ENCODE measurements at regions of chr13 and their contacts with region 1.

Region 1: GRCh38 chr13:25232937-25233515 is 54.3 kb downstream of the MTMR6 start:
- DNase-seq: no peak
- H3K4me3 Mint-ChIP-seq: no peak overlapping the region
- H3K27ac Mint-ChIP-seq: no peak overlapping the region
- H3K4me1 Mint-ChIP-seq: no peaks in the 10 kb centered on the region
- H3K27me3 Mint-ChIP-seq: no peaks in the 10 kb centered on the region

Region 2: GRCh38 chr13:25319771-25320170 is 86.7 kb after region 1 on chr13:
- intact Hi-C with region 1: no loop called
- DNase-seq: no peak
- H3K4me3 Mint-ChIP-seq: no peak overlapping the region
- H3K27ac Mint-ChIP-seq: no peak overlapping the region
- H3K4me1 Mint-ChIP-seq: peaks cover 8% of the 10 kb centered on the region
- H3K27me3 Mint-ChIP-seq: no peaks in the 10 kb centered on the region

Region 3: GRCh38 chr13:25375727-25376358 is 142.8 kb after region 1 on chr13:
- intact Hi-C with region 1: loop called (anchors 1 kb)
- DNase-seq: no peak
- H3K4me3 Mint-ChIP-seq: no peak overlapping the region
- H3K27ac Mint-ChIP-seq: no peak overlapping the region
- H3K4me1 Mint-ChIP-seq: peaks cover 2% of the 10 kb centered on the region
- H3K27me3 Mint-ChIP-seq: peaks cover 57% of the 10 kb centered on the region

Region 4: GRCh38 chr13:25406377-25406915 is 173.4 kb after region 1 on chr13:
- intact Hi-C with region 1: no loop called
- DNase-seq: no peak
- H3K4me3 Mint-ChIP-seq: no peak overlapping the region
- H3K27ac Mint-ChIP-seq: no peak overlapping the region
- H3K4me1 Mint-ChIP-seq: no peaks in the 10 kb centered on the region
- H3K27me3 Mint-ChIP-seq: peaks cover 6% of the 10 kb centered on the region

Region 5: DNA sequence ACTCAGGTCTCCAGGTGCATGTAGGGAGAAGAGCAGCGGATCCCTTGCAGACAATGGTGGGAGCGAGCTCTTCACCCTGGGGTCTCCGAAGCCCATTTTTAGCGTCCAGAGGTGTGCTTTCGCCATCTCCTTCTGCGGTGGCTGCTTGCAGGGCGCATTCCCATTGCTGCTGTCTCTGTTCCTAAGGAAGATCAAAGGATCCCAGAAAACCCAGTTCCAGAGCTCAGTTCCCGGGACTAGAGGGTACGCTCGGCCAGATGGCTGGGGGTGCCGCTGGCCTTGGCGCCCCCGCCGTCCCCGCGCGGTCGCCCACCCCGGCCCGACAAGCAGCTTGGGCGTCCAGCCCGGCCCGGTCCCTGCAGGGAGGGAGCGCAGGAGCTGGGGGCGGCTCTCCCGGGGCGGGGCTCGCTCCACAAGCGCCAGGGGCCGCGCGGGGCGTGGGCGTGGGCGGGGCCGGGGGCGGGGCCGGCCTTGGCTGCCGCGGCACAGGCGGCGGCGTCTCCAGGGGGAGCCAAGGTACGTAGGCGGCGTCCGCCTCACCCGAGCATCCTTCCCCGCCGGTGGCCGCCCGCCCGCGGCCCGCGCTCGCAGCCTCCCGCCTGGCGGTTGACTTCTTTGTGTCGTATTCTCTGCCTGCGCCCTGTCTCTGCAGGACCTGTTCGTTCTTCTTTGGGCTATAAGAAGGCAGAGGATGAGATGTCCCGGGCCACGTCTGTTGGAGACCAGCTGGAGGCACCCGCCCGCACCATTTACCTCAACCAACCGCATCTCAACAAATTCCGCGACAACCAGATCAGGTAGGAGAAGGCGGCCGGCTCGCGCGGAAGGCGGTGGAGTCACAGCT is 235.5 kb after region 1 on chr13:
- intact Hi-C with region 1: no loop called
- DNase-seq: no peak
- H3K4me3 Mint-ChIP-seq: no peak overlapping the region
- H3K27ac Mint-ChIP-seq: no peak overlapping the region
- H3K4me1 Mint-ChIP-seq: peaks cover 2% of the 10 kb centered on the region
- H3K27me3 Mint-ChIP-seq: peaks cover 44% of the 10 kb centered on the region

Measured in activated T-helper 2 cell treated with anti-CD3 and anti-CD28 coated beads, Interferon-gamma antibody, Interleukin-2, Interleukin-4, amounts not matched to agents 10 μg/mL and 5 μg/mL and 100 μg/mL, durations not matched to agents 14 hours and 24 hours and 36 hours (primary cell).